ACHN (cell line): ENCODE measurements at regions of chr7 and their contacts with region 1.

Region 1: DNA sequence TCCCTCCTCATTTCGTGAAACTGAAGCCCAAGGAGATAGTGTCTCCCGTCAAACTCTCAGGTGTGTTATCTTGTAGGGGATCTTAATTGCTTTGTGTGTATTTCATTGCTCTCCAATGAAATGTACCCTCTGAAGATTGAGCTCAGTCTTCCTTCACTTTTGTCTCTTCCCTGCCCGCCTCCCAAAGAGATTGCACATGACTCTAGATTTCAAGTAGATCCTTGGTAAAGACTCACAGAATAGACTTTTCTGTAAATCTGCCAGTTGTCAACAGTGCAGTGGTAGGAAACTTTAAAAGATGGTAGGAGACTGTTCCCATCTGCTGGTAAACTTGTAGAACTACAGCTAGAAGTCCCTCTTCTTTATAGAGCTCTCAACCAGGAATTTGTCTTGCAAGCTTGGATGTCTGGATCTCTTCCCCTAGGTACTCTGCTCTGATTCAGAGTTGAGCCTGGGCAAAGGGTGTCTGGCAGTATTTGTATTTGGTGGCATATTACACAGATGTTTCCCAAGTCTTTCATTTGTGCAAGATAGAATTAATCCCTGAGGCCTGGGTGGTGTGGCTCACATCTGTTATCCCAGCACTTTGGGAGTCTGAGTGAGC is 9.6 kb downstream of the CCL26 start:
- DNase-seq: peak; percentile 79

Region 2: DNA sequence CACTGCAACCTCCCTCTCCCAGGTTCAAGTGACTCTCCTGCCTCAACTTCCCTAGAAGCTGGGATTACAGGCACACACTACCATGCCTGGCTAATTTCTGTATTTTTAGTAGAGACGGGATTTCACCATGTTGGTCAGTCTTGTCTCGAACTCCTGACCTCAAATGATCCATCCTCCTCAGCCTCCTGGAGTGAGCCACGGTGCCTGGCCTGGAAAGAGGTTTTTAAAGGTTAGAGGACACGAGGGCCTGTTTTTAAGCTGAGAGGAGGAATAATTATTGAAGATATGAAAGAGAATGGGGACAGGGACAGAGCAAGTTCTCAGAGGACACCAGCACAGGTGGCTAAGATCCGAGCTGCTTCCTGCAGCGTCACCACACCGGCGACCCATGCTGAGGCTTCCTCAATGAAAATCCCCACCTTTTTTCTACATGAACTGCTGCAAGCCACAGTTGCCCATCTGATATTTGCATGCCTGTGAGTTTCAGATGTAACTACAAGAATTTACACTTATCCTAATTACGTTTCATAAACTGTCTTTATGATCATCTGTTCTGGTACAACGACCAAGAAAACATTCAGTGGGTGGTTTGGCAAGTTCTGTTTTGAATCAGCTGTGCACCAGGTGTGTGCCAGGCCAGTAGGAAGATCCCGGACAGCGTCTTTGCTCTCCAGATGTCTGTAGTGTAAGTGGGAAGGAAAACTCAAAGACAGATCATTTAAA is 99.7 kb before region 1 on chr7:
- in situ Hi-C with region 1: loop called (anchors 25 kb)
- DNase-seq: no peak

Region 3: GRCh38 chr7:76020031-76020714 is 257.8 kb after region 1 on chr7:
- in situ Hi-C with region 1: no loop called
- DNase-seq: peak; percentile 70